Mammary epithelial cell (primary cell): ENCODE measurements at regions of chr5 and their contacts with region 1.

Region 1: GRCh38 chr5:107564896-107565512 is 105.7 kb downstream of the EFNA5 start:
- DNase-seq: no peak
- H3K4me3 ChIP-seq: no peak overlapping the region
- H3K27ac ChIP-seq: no peak overlapping the region
- H3K4me1 ChIP-seq: peaks cover 37% of the 10 kb centered on the region
- H3K27me3 ChIP-seq: no peaks in the 10 kb centered on the region
- CTCF ChIP-seq: no peak

Region 2: GRCh38 chr5:107630202-107630601 is 65.2 kb after region 1 on chr5:
- CTCF ChIA-PET with region 1: interaction called, 22 read pairs
- dilution Hi-C with region 1: no loop called
- in situ Hi-C with region 1: no loop called
- intact Hi-C with region 1: no loop called
- DNase-seq: no peak
- H3K4me3 ChIP-seq: no peak overlapping the region
- H3K27ac ChIP-seq: no peak overlapping the region
- H3K4me1 ChIP-seq: no peaks in the 10 kb centered on the region
- H3K27me3 ChIP-seq: no peaks in the 10 kb centered on the region
- CTCF ChIP-seq: no peak